Activated CD8-positive, alpha-beta T cell treated with anti-CD3 and anti-CD28 coated beads for 36 hours (primary cell): ENCODE measurements at regions of chr11 and their contacts with region 1.

Region 1: GRCh38 chr11:62427630-62428233 is 8.9 kb downstream of the SCGB1A1 start:
- DNase-seq: peak; percentile 44
- ATAC-seq: peak; percentile 57
- H3K4me3 Mint-ChIP-seq: peak overlapping the region; percentile 18
- H3K27ac Mint-ChIP-seq: peak overlapping the region; percentile 83
- H3K4me1 Mint-ChIP-seq: peaks cover 40% of the 10 kb centered on the region
- H3K27me3 Mint-ChIP-seq: peaks cover 7% of the 10 kb centered on the region
- CTCF ChIP-seq: no peak

Region 2: DNA sequence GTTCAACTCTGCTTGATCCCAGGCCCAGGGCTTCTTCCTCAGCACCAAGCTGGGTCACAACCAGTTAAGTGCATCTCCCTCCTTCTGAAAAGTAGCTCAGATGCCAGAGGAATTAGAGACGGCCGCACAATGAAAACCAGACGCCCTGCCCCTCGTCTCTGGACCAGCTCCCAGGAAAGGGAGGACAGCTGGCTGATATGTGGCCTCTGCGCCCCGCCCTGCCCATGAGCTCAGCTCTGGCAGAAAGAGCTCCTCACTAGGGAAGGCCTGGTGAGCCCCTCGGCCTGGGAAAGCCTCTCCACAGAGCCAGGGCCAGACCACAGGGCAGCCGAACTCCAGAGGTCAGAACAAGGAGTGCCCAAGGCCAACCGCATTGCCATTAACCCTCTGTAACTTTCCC is 27.0 kb before region 1 on chr11:
- CTCF ChIA-PET with region 1: interaction called, 72 read pairs
- POLR2A ChIA-PET with region 1: interaction called, 7 read pairs
- intact Hi-C with region 1: no loop called
- DNase-seq: no peak
- ATAC-seq: no peak
- H3K4me3 Mint-ChIP-seq: peak overlapping the region; percentile 14
- H3K27ac Mint-ChIP-seq: no peak overlapping the region
- H3K4me1 Mint-ChIP-seq: peaks cover 47% of the 10 kb centered on the region
- H3K27me3 Mint-ChIP-seq: no peaks in the 10 kb centered on the region
- CTCF ChIP-seq: no peak

Region 3: DNA sequence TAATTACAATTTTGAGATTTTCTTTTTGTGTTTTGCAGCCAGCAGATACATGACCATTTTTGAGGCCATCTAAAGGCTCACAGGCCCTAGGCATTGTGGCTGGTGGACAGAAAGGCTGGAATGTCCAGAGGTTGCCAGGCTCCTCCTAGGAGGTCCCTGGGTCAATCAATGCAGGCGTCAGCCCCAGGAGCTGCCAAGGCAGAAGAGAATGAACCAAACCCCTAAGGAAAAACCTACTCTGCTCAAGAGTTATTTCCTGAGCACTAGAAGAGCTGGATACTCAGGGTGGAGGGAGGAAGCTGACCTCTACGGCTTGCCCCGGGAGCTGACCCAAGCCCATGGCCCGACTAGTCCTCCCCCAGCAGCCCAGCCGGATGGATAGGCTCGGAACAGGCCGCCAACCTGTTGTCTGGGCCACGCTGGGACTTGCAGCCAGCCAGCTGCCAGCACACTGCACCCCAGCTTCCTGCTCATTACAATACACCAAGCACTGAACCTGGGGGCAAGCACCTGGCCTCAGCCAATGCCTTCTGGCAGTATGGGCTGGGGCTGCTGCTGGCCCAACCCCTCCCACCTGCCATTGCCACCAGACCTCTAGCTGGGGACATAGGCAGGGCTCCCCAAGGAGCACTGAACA is 14.6 kb before region 1 on chr11:
- CTCF ChIA-PET with region 1: interaction called, 12 read pairs
- POLR2A ChIA-PET with region 1: no interaction called
- intact Hi-C with region 1: no loop called
- DNase-seq: no peak
- ATAC-seq: no peak
- H3K4me3 Mint-ChIP-seq: no peak overlapping the region
- H3K27ac Mint-ChIP-seq: no peak overlapping the region
- H3K4me1 Mint-ChIP-seq: no peaks in the 10 kb centered on the region
- H3K27me3 Mint-ChIP-seq: no peaks in the 10 kb centered on the region
- CTCF ChIP-seq: no peak

Region 4: DNA sequence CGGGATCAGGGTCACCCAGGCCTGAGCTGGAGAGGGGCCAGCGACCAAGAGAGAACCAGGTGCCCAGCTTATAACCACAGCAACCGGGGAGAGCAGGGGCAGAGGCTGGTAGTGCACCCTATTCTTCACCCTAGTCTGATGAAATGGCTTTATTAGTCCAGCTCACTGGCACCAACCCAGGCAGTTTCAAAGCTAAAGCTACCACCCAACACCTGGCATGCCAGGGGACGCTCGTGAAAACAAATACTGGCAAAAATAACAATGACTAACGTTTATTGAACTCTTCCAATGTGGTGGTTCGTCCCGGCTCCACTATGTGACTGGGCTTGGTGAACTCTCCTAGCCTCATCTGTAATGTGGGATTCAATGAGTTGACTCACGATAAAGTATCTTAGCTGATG is 21.7 kb after region 1 on chr11:
- CTCF ChIA-PET with region 1: interaction called, 17 read pairs
- POLR2A ChIA-PET with region 1: no interaction called
- intact Hi-C with region 1: no loop called
- DNase-seq: no peak
- ATAC-seq: no peak
- H3K4me3 Mint-ChIP-seq: no peak overlapping the region
- H3K27ac Mint-ChIP-seq: no peak overlapping the region
- H3K4me1 Mint-ChIP-seq: peaks cover 2% of the 10 kb centered on the region
- H3K27me3 Mint-ChIP-seq: peaks cover 16% of the 10 kb centered on the region
- CTCF ChIP-seq: no peak

Region 5: GRCh38 chr11:62487738-62488551 is 60.2 kb after region 1 on chr11:
- CTCF ChIA-PET with region 1: interaction called, 12 read pairs
- POLR2A ChIA-PET with region 1: no interaction called
- intact Hi-C with region 1: no loop called
- DNase-seq: no peak
- ATAC-seq: no peak
- H3K4me3 Mint-ChIP-seq: no peak overlapping the region
- H3K27ac Mint-ChIP-seq: no peak overlapping the region
- H3K4me1 Mint-ChIP-seq: peaks cover 2% of the 10 kb centered on the region
- H3K27me3 Mint-ChIP-seq: no peaks in the 10 kb centered on the region
- CTCF ChIP-seq: no peak

Region 6: GRCh38 chr11:62542750-62543567 is 115.2 kb after region 1 on chr11:
- CTCF ChIA-PET with region 1: interaction called, 186 read pairs
- POLR2A ChIA-PET with region 1: interaction called, 4 read pairs
- intact Hi-C with region 1: loop called (anchors 2 kb)
- DNase-seq: peak; percentile 85
- ATAC-seq: peak; percentile 65
- H3K4me3 Mint-ChIP-seq: peak overlapping the region; percentile 79
- H3K27ac Mint-ChIP-seq: peak overlapping the region; percentile 73
- H3K4me1 Mint-ChIP-seq: peaks cover 76% of the 10 kb centered on the region
- H3K27me3 Mint-ChIP-seq: peaks cover 3% of the 10 kb centered on the region
- CTCF ChIP-seq: peak; percentile 100

Region 7: GRCh38 chr11:62567018-62567633 is 139.4 kb after region 1 on chr11:
- CTCF ChIA-PET with region 1: interaction called, 29 read pairs
- POLR2A ChIA-PET with region 1: no interaction called
- intact Hi-C with region 1: no loop called
- DNase-seq: no peak
- ATAC-seq: peak; percentile 49
- H3K4me3 Mint-ChIP-seq: no peak overlapping the region
- H3K27ac Mint-ChIP-seq: peak overlapping the region; percentile 61
- H3K4me1 Mint-ChIP-seq: peaks cover 57% of the 10 kb centered on the region
- H3K27me3 Mint-ChIP-seq: no peaks in the 10 kb centered on the region
- CTCF ChIP-seq: no peak